ENCODE measurements at regions of chr15 and their contacts with region 1.

Region 1: GRCh38 chr15:75672646-75673425 is 25.1 kb downstream of the SNX33 start:
- DNase-seq: peak; percentile 26 to 52
- H3K4me3 ChIP-seq: no peak overlapping the region
- H3K4me3 Mint-ChIP-seq: no peak overlapping the region
- H3K27ac Mint-ChIP-seq: peak overlapping the region; percentile 60
- H3K4me1 ChIP-seq: peaks cover 20% of the 10 kb centered on the region
- H3K4me1 Mint-ChIP-seq: peaks cover 7% of the 10 kb centered on the region
- H3K27me3 ChIP-seq: no peaks in the 10 kb centered on the region
- H3K27me3 Mint-ChIP-seq: no peaks in the 10 kb centered on the region
- CTCF ChIP-seq: no peak

Region 2: GRCh38 chr15:75215107-75216004 is 457.5 kb before region 1 on chr15:
- CTCF ChIA-PET with region 1: no interaction called
- POLR2A ChIA-PET with region 1: no interaction called
- intact Hi-C with region 1: no loop called
- DNase-seq: peak in 1 of 2 experiments; percentile 38
- H3K4me3 ChIP-seq: no peak overlapping the region
- H3K4me3 Mint-ChIP-seq: no peak overlapping the region
- H3K27ac Mint-ChIP-seq: peak overlapping the region; percentile 0
- H3K4me1 ChIP-seq: no peaks in the 10 kb centered on the region
- H3K4me1 Mint-ChIP-seq: no peaks in the 10 kb centered on the region
- H3K27me3 ChIP-seq: no peaks in the 10 kb centered on the region
- H3K27me3 Mint-ChIP-seq: no peaks in the 10 kb centered on the region
- CTCF ChIP-seq: no peak

Region 3: DNA sequence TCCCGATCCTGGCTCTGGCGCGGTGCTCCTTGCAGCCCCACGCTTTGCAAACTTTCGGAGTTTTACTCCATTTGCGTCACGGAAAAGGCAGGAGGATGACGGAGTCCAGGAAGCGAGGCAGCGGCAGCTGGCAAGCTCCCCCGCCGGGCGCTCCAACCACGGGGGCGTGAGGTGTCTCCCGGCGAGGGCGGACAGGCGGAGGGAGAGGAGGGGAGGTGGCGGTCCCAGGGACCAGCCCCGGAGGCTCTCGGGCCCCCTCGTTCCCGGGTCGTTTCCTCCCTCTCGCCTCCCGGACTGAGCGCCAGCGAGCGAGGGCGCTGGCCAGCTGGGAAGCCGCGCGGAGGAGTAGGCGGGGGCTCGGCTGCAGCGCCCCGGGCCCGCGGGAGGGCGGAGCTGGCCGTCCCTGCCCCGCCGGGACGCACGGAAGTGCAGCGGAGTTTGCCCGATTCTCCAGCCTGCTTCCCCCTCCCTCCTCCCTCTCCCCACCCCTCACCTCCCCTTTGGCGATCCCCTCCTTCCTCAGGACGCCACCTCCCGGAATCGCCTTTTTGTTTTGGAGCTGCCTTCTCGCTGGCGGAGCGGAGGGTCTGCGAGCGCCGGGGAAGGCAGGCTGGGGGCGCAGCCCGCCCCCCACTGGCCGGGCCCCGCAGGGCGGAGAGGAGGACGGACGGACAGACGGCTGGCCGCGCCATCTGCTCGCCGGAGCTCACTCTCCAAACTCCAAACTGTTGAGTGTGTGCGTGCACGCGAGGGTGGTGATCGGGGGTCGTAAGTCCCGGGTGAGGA is 25.3 kb before region 1 on chr15 and contains the start of gene SNX33:
- CTCF ChIA-PET with region 1: interaction called, 13 read pairs
- POLR2A ChIA-PET with region 1: interaction called, 10 read pairs
- intact Hi-C with region 1: no loop called
- DNase-seq: peak; percentile 88
- H3K4me3 ChIP-seq: peak within 1 kb of the TSS; percentile 66
- H3K4me3 Mint-ChIP-seq: peak within 1 kb of the TSS; percentile 75
- H3K27ac Mint-ChIP-seq: peak within 1 kb of the TSS; percentile 89
- H3K4me1 ChIP-seq: peaks cover 45% of the 10 kb centered on the region
- H3K4me1 Mint-ChIP-seq: peaks cover 24% of the 10 kb centered on the region
- H3K27me3 ChIP-seq: no peaks in the 10 kb centered on the region
- H3K27me3 Mint-ChIP-seq: no peaks in the 10 kb centered on the region
- CTCF ChIP-seq: peak in 1 of 2 experiments; percentile 51
- total RNA-seq, gene SNX33: 17.9 and 19.4 TPM in 2 replicates

Region 4: DNA sequence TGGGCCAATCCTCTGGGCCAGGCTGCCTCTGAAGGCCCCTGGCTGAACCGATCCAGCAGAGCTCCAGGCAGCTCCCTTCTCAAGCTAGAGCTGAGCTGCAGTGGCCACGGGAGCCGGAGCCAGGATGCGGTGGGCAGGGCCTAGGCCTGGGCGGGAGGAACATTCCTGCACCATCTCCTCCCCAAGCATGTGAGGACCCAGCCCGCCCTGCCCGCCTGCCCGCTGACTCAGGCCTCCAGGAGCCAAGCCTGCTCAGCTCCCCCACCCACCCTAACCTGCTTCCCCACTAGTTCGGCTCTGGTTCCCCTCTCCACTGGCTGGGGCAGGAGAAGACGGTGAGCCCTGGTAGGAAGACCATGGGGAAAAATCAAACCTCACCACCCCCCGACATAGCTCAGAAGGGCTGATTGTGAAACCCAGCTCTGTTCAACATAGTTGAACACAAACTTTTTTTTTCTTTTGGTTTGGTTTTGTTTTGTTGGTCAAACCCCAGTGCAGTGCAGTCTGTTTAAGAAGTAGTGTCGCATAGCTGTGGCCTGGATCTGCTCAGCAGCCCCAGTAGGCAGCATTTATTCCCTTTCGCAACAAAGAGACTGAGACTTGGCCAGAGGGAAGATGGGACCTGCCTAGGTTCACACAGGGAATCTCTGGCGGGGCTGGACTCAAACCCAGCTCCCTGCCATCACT is 11.6 kb before region 1 on chr15:
- CTCF ChIA-PET with region 1: interaction called, 4 read pairs
- POLR2A ChIA-PET with region 1: no interaction called
- intact Hi-C with region 1: loop called (anchors 1 kb)
- DNase-seq: peak; percentile 59 to 60
- H3K4me3 ChIP-seq: no peak overlapping the region
- H3K4me3 Mint-ChIP-seq: no peak overlapping the region
- H3K27ac Mint-ChIP-seq: peak overlapping the region; percentile 5
- H3K4me1 ChIP-seq: peaks cover 56% of the 10 kb centered on the region
- H3K4me1 Mint-ChIP-seq: peaks cover 54% of the 10 kb centered on the region
- H3K27me3 ChIP-seq: no peaks in the 10 kb centered on the region
- H3K27me3 Mint-ChIP-seq: no peaks in the 10 kb centered on the region
- CTCF ChIP-seq: no peak